Ovary (tissue), 10 donors: ENCODE measurements at regions of chr12 and their contacts with region 1.

Region 1: DNA sequence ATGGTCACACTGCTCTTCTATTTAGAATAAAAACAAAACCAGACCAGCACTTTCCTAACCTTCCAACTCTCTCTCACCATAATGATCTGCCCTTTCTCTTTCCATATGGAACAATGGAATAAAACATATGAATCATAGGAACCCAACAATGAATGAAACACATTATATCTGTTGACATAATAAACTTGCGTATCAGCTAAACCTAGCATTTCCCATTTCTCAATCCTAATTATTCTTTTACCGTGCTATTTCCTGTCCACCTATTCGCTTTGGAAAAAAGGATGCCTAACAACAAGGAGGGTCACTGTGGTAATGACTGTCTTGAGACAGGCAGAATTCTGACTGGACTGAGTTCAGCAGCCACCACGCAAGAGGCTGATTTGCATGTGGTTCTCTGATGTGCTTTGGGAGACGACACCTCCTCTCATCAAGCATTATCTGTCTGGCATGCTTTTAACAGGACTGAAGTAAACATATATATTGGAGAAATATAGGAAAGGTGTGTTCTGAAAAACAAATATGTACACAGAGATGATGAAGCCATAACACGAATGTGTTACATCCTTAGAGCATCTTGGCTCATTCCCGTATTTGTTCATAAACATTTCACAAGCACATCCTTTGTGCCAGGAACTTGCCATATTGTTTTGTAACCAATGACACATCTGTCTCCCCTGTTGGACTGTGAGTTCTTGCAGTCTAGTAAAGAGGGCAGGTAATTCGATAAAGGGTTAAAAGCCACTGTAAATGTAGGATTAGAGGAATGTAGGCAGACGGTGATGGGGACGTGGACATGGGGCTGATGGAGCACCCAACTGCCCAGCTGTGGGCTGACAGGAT is 87.7 kb downstream of the PTPRB start:
- DNase-seq: no peak
- H3K4me3 ChIP-seq: no peak overlapping the region
- H3K27ac ChIP-seq: no peak overlapping the region
- H3K4me1 ChIP-seq: no peaks in the 10 kb centered on the region
- H3K27me3 ChIP-seq: no peaks in the 10 kb centered on the region
- CTCF ChIP-seq: no peak
- EP300 ChIP-seq: no peak
- POLR2A ChIP-seq: no peak

Region 2: GRCh38 chr12:70049600-70050360 is 499.8 kb before region 1 on chr12:
- intact Hi-C with region 1: loop called in 1 of 4 experiments (anchors 10 kb)
- DNase-seq: no peak
- H3K4me3 ChIP-seq: no peak overlapping the region
- H3K27ac ChIP-seq: no peak overlapping the region
- H3K4me1 ChIP-seq: no peaks in the 10 kb centered on the region
- H3K27me3 ChIP-seq: no peaks in the 10 kb centered on the region
- CTCF ChIP-seq: no peak
- EP300 ChIP-seq: no peak
- POLR2A ChIP-seq: no peak

Region 3: DNA sequence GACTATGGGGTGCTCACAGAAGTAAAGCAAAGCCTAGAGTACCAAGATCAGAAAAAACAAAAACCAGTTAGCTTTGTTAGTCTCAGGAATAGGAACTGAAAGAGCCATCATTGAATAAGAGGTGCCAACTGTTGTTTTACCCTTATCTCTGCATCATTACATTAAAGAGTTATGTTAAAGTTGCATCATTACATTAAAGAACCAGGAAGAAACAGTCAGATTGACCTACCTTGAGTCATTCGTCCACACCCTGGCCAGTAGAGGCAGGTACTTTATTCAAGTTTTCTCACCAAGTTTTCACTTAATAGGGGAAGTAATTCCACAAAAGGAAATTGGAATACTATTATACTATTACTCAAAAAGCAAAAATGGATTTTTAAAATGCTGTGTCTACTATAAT is 428.0 kb before region 1 on chr12:
- intact Hi-C with region 1: no loop called
- DNase-seq: no peak
- H3K4me3 ChIP-seq: no peak overlapping the region
- H3K27ac ChIP-seq: no peak overlapping the region
- H3K4me1 ChIP-seq: no peaks in the 10 kb centered on the region
- H3K27me3 ChIP-seq: no peaks in the 10 kb centered on the region
- CTCF ChIP-seq: no peak
- EP300 ChIP-seq: no peak
- POLR2A ChIP-seq: no peak